ENCODE measurements at regions of chr4 and their contacts with region 1.

Region 1: DNA sequence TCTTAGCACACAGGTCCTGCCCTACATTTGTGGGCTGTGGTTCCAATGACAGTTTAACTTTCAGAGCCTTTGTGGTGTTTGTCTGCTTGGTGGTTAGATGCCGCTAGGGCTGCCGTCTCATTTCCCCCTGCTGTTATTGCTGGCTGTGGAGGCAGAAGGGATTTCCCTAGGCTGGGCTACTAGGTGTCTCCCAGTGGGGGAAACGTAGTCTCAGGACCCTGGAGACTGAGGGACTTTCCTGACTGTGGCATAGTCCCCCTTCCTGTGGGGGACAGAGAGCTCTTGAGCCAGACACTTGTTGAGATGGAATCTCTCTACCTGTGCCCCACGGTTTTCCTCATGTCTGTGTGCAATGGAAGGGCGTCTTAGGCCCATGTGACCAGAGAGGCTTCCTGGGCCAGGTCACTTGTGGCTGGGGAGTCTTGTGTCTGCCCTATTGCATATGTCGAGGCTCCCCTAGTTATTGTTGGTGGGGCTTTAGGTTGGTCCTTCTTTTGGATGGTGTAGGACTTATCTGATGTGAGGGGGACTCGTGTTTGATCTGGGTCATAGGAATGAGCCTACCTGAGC is 68.2 kb downstream of the ARHGAP10 start:
- DNase-seq: peak; percentile 54 to 89
- ATAC-seq: peak; percentile 93 to 97 (median 94)
- H3K4me3 ChIP-seq: no peak overlapping the region
- H3K4me3 Mint-ChIP-seq: peak overlapping the region; percentile 81
- H3K27ac ChIP-seq: peak overlapping the region; percentile 51
- H3K27ac Mint-ChIP-seq: peak overlapping the region; percentile 84 to 92
- H3K4me1 ChIP-seq: peaks cover 22% of the 10 kb centered on the region
- H3K4me1 Mint-ChIP-seq: peaks cover 52 to 55% of the 10 kb centered on the region in 2 donors
- H3K27me3 ChIP-seq: no peaks in the 10 kb centered on the region
- H3K27me3 Mint-ChIP-seq: peaks cover 17 to 27% of the 10 kb centered on the region in 2 donors
- CTCF ChIP-seq: no peak

Region 2: DNA sequence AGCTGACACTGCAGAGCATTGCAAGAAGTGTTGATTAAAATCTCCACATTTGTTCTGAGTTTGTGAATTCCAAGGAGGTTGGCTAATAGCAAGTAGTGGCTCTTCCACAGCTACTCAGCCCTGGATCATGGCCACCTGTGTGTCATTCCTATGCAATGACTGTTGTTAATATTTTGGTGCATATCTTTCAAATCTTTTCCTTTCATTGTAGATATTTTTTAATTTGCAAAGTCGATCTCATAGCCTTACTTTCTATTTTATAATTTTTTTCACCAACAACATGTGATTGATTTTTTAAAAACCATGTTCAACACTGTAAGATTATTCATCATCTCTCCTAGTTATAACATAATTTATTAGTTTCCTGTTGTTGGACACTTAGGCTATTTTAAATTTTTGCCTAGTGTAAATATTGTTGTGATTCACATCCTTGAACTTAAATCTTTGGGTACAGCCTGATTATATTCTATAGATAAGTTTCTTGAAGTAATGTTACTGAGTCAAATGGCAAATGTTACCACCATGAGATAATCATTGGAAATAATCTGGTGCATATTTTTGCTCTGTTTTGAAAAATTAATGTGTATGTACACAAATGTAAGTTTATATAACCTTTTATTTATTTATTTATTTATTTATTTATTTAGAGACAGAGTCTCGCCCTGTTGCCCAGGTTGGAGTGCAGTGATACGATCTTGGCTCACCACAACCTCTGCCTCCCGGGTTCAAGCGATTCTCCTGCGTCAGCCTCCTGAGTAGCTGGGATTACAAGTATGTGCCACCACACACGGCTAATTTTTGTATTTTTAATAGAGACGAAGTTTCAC is 85.3 kb before region 1 on chr4:
- intact Hi-C with region 1: no loop called
- DNase-seq: no peak
- ATAC-seq: no peak
- H3K4me3 ChIP-seq: no peak overlapping the region
- H3K4me3 Mint-ChIP-seq: no peak overlapping the region
- H3K27ac ChIP-seq: no peak overlapping the region
- H3K27ac Mint-ChIP-seq: no peak overlapping the region
- H3K4me1 ChIP-seq: no peaks in the 10 kb centered on the region
- H3K4me1 Mint-ChIP-seq: no peaks in the 10 kb centered on the region
- H3K27me3 ChIP-seq: no peaks in the 10 kb centered on the region
- H3K27me3 Mint-ChIP-seq: peaks cover 10 to 20% of the 10 kb centered on the region in 2 donors
- CTCF ChIP-seq: no peak

Region 3: GRCh38 chr4:147731580-147732517 is 68.2 kb before region 1 on chr4 and contains the start of gene ARHGAP10:
- intact Hi-C with region 1: loop called (anchors 2 kb)
- DNase-seq: peak; percentile 55 to 76
- ATAC-seq: peak; percentile 77 to 79 (median 79)
- H3K4me3 ChIP-seq: peak within 1 kb of the TSS; percentile 96
- H3K4me3 Mint-ChIP-seq: peak within 1 kb of the TSS; percentile 94
- H3K27ac ChIP-seq: peak within 1 kb of the TSS; percentile 68
- H3K27ac Mint-ChIP-seq: peak within 1 kb of the TSS; percentile 77 to 94
- H3K4me1 ChIP-seq: peaks cover 26% of the 10 kb centered on the region
- H3K4me1 Mint-ChIP-seq: peaks cover 48 to 50% of the 10 kb centered on the region in 2 donors
- H3K27me3 ChIP-seq: no peaks in the 10 kb centered on the region
- H3K27me3 Mint-ChIP-seq: no peaks in the 10 kb centered on the region
- CTCF ChIP-seq: no peak
- total RNA-seq, gene ARHGAP10: 13.9 to 28.7 (median 23.2) TPM